Activated T-helper 1 cell treated with anti-CD3 and anti-CD28 coated beads, Interleukin-12 subunit alpha, Interleukin-12 subunit beta, Interleukin-2, Interleukin-4 antibody, amounts not matched to agents 30 ng/mL and 10 ng/mL and 1 ng/mL, durations not matched to agents 14 hours and 24 hours and 36 hours (primary cell): ENCODE measurements at regions of chr16 and their contacts with region 1.

Region 1: GRCh38 chr16:17238284-17239028 is 232.3 kb downstream of the XYLT1 start:
- DNase-seq: no peak
- H3K4me3 Mint-ChIP-seq: no peak overlapping the region
- H3K27ac Mint-ChIP-seq: peak overlapping the region; percentile 69
- H3K4me1 Mint-ChIP-seq: peaks cover 29% of the 10 kb centered on the region
- H3K27me3 Mint-ChIP-seq: no peaks in the 10 kb centered on the region

Region 2: GRCh38 chr16:17261197-17261858 is 22.9 kb after region 1 on chr16:
- intact Hi-C with region 1: loop called (anchors 1 kb)
- DNase-seq: peak; percentile 15
- H3K4me3 Mint-ChIP-seq: no peak overlapping the region
- H3K27ac Mint-ChIP-seq: no peak overlapping the region
- H3K4me1 Mint-ChIP-seq: peaks cover 29% of the 10 kb centered on the region
- H3K27me3 Mint-ChIP-seq: no peaks in the 10 kb centered on the region

Region 3: DNA sequence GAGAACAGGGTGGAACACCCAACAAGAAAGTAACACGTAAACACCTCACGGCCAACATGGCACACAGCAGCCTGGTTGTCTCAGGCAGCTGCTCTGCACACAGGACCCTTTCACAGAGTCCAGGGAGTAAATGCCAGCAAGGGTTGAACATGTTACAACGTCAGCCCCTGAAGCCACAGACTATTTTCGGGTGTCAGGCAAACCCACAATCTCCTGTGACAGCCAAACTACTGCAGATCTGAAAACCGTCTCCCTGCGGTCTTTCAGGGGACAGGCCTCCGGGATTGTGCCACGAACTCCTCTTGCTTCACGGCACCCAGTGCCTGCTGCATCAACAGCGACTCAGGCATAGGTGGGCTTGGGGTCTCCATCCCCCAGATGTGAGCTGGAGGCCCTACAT is 104.6 kb after region 1 on chr16:
- intact Hi-C with region 1: loop called (anchors 1 kb)
- DNase-seq: peak; percentile 58
- H3K4me3 Mint-ChIP-seq: peak overlapping the region; percentile 61
- H3K27ac Mint-ChIP-seq: peak overlapping the region; percentile 58
- H3K4me1 Mint-ChIP-seq: peaks cover 77% of the 10 kb centered on the region
- H3K27me3 Mint-ChIP-seq: no peaks in the 10 kb centered on the region

Region 4: DNA sequence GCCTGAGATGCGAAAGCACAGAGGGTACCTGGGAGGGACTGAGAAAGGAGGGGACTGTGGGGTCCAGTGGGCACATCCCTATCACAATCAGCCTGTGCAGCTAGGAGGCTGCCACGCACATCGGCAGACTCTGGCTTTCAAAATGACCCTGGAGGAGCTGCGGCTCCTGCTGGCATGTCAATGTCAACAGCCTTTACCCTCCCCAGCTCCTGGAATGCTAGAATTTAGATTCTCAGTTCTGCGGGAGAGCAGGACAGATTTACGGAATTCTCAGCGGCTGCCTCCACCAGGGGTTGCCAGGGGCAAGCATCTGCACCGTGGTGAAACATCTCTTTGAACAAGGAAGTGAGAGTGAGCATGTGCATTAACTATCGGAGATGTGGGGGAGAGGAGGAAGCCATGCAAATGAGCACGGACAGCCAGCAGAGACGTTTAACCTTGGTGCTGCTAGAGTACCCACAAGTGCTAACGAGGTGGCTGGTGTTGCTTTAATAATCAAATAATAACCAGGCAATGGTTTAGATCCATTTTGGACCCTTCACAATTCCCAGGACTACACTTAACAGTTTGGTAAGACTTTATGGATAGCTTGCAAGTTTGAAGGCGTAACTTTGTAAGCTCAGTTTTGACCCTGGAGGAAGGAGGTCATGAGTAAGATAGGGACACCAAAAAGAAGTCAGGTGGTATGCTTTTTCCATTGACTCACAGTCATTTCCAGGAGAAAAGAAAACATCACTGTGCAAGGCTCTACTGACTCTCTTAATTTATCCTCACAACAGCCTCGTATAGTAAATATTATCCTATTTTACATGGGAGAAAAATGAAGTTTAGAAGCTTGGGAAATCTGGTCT is 178.2 kb after region 1 on chr16:
- intact Hi-C with region 1: loop called (anchors 2 kb)
- DNase-seq: peak; percentile 40
- H3K4me3 Mint-ChIP-seq: peak overlapping the region; percentile 82
- H3K27ac Mint-ChIP-seq: peak overlapping the region; percentile 97
- H3K4me1 Mint-ChIP-seq: peaks cover 46% of the 10 kb centered on the region
- H3K27me3 Mint-ChIP-seq: no peaks in the 10 kb centered on the region